ENCODE measurements at regions of chr15 and their contacts with region 1.

Region 1: DNA sequence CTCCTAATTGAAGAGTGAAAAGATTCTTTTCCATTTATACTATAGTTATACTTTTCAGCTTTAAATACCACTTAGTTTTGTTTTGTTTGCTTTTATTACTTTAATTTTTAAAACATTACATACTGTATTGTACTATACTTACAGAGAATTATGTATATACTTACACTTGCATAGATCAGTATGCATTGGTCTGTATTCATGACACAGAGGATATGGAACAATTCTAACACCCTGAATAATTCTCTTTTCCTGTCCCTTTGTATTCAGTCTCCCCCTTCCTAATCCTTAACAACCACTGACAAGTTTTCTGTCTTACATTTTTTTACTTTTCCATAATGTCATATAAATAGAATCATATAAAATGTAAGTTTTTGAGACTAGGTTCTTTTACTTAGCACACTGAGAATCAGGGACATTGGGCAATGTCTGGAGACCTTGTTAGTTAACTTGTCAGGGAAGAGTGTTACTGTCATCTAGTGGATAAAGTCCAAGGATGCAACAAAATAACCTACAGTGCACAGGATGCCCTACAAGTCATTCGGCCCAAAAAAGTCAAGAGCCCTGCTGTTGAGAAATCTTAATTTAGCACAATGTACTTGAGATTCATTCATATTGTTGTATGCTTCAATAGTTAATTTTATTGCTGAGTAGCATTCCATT is 95.7 kb upstream of the MCTP2 start:
- DNase-seq: no peak
- ATAC-seq: no peak
- H3K4me3 ChIP-seq: no peak overlapping the region
- H3K27ac ChIP-seq: no peak overlapping the region
- H3K4me1 ChIP-seq: no peaks in the 10 kb centered on the region
- H3K27me3 ChIP-seq: no peaks in the 10 kb centered on the region
- CTCF ChIP-seq: peak; percentile 11; the same call in 1 of the 2 replicates

Region 2: GRCh38 chr15:94008104-94009074 is 127.2 kb before region 1 on chr15:
- CTCF ChIA-PET with region 1: no interaction called
- POLR2A ChIA-PET with region 1: no interaction called
- in situ Hi-C with region 1: no loop called
- intact Hi-C with region 1: no loop called
- DNase-seq: no peak
- ATAC-seq: no peak
- H3K4me3 ChIP-seq: no peak overlapping the region
- H3K27ac ChIP-seq: no peak overlapping the region
- H3K4me1 ChIP-seq: no peaks in the 10 kb centered on the region
- H3K27me3 ChIP-seq: no peaks in the 10 kb centered on the region
- CTCF ChIP-seq: no peak

Region 3: DNA sequence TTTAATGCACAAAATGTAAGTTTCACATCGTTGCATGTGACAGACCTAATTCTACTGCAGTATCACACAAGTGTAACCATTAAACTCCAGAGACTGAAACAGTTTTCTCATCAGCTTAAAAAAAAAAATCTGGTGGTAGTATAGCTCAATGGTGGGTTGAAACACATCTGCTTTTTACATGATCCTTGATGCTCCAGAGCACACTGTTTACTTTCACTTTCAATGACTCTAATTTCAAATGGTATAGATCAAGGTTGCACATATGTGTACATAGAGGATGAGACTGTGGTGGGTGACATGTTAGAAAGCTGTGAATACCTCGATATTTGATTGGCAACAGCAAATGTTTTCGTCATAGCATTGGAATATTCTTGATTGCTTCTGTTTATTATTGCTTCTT is 118.1 kb after region 1 on chr15:
- CTCF ChIA-PET with region 1: no interaction called
- POLR2A ChIA-PET with region 1: no interaction called
- in situ Hi-C with region 1: no loop called
- intact Hi-C with region 1: no loop called
- DNase-seq: no peak
- ATAC-seq: no peak
- H3K4me3 ChIP-seq: no peak overlapping the region
- H3K27ac ChIP-seq: no peak overlapping the region
- H3K4me1 ChIP-seq: no peaks in the 10 kb centered on the region
- H3K27me3 ChIP-seq: no peaks in the 10 kb centered on the region
- CTCF ChIP-seq: no peak

Region 4: DNA sequence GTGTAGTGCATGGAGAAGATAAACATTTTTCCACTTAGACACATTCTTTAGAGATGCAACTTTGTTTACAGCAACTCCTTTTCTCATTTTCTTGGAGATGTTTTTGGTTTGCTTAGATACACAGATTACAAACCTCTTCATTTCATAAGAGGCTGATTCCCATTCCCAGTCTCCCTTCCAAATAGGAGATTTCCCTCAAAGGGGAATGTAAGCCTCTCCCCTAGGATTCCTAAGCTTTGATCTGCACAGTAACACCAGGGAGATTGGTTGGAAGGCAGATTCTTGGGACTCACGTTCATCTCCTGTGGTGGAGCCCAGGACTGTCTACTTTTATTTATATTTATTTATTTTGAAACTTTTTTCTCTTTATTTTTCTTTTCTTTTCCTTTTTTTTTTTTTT is 158.9 kb after region 1 on chr15:
- CTCF ChIA-PET with region 1: no interaction called
- POLR2A ChIA-PET with region 1: interaction called, 10 read pairs
- in situ Hi-C with region 1: no loop called
- intact Hi-C with region 1: no loop called
- DNase-seq: no peak
- ATAC-seq: no peak
- H3K4me3 ChIP-seq: no peak overlapping the region
- H3K27ac ChIP-seq: no peak overlapping the region
- H3K4me1 ChIP-seq: no peaks in the 10 kb centered on the region
- H3K27me3 ChIP-seq: no peaks in the 10 kb centered on the region
- CTCF ChIP-seq: no peak

Measured in Panc1 (cell line).